ENCODE measurements at regions of chr15 and their contacts with region 1.

Region 1: DNA sequence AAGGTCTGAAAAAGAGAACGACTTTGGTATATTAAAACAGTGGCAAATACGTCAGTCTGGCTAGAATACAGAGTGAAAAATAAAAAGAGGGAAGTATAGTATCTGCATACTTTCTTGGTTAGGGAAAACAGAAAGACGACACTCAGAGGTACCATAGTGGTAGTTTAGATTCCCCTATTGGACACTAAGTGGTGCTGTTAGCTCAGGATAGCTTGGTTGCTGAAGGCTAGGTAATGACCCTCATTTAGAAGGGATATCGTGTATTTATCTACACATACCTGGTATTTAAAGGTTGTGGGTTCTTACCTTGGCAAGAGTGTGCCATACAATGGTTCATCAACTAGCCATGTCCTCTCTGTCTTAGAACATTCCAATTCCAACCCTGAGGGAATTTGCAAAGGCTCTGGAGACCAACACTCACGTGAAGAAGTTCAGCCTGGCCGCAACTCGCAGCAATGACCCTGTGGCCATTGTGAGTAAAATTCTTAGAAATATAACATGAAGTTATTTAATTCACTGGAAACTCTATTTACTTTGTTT is 31.0 kb downstream of the TMOD2 start:
- DNase-seq: peak; percentile 41 to 52 (median 45)
- ATAC-seq: peak; percentile 82
- H3K4me3 ChIP-seq: no peak overlapping the region
- H3K27ac ChIP-seq: no peak overlapping the region
- H3K4me1 ChIP-seq: no peaks in the 10 kb centered on the region
- H3K27me3 ChIP-seq: no peaks in the 10 kb centered on the region
- CTCF ChIP-seq: peak; percentile 63 to 75 (median 68)
- EP300 ChIP-seq: no peak
- POLR2A ChIP-seq: no peak
- RAD21 ChIP-seq: peak; percentile 39 to 79; a peak in 3 of 4 replicates

Region 2: DNA sequence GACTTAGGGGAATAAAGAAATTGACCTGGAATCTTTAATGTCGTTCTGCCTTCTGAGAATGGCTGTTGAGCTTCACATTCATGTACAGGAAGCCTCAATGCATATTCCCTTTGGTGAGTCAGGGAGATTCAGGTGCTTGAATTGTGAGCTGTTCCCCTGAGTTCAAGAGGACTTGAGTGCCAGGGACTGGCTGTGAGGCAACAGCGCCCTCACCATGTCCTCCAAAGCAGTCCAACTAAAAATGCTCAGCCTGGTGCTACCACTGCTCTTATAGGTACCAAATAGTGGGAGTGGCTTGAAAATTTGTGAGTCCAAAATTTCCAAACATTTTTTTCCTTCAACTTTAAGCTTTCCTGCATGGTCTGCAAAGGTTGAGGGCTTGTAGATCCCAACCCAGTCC is 135.1 kb after region 1 on chr15:
- CTCF ChIA-PET with region 1: no interaction called
- POLR2A ChIA-PET with region 1: no interaction called
- in situ Hi-C with region 1: no loop called
- intact Hi-C with region 1: loop called (anchors 1 kb)
- DNase-seq: peak; percentile 17 to 59 (median 30)
- ATAC-seq: peak; percentile 96
- H3K4me3 ChIP-seq: no peak overlapping the region
- H3K27ac ChIP-seq: no peak overlapping the region
- H3K4me1 ChIP-seq: no peaks in the 10 kb centered on the region
- H3K27me3 ChIP-seq: no peaks in the 10 kb centered on the region
- CTCF ChIP-seq: peak; percentile 65 to 70 (median 70)
- EP300 ChIP-seq: no peak
- POLR2A ChIP-seq: no peak
- RAD21 ChIP-seq: peak in 1 of 2 experiments; percentile 69; a peak in 3 of 4 replicates

Measured in K562 (cell line).